Calu3 (cell line): ENCODE measurements at regions of chr22 and their contacts with region 1.

Region 1: GRCh38 chr22:39543095-39543494 is 10.5 kb upstream of the RPS19BP1 start:
- DNase-seq: no peak
- H3K4me3 Mint-ChIP-seq: no peak overlapping the region
- H3K27ac Mint-ChIP-seq: no peak overlapping the region
- H3K4me1 Mint-ChIP-seq: peaks cover 9% of the 10 kb centered on the region
- H3K27me3 Mint-ChIP-seq: peaks cover 74% of the 10 kb centered on the region
- CTCF ChIP-seq: peak; percentile 35

Region 2: GRCh38 chr22:39230261-39231196 is 312.6 kb before region 1 on chr22:
- CTCF ChIA-PET with region 1: no interaction called
- intact Hi-C with region 1: no loop called
- DNase-seq: no peak
- H3K4me3 Mint-ChIP-seq: no peak overlapping the region
- H3K27ac Mint-ChIP-seq: no peak overlapping the region
- H3K4me1 Mint-ChIP-seq: peaks cover 5% of the 10 kb centered on the region
- H3K27me3 Mint-ChIP-seq: no peaks in the 10 kb centered on the region
- CTCF ChIP-seq: no peak

Region 3: GRCh38 chr22:39643311-39644083 is 100.4 kb after region 1 on chr22:
- CTCF ChIA-PET with region 1: no interaction called
- intact Hi-C with region 1: no loop called
- DNase-seq: no peak
- H3K4me3 Mint-ChIP-seq: no peak overlapping the region
- H3K27ac Mint-ChIP-seq: no peak overlapping the region
- H3K4me1 Mint-ChIP-seq: no peaks in the 10 kb centered on the region
- H3K27me3 Mint-ChIP-seq: peaks cover 60% of the 10 kb centered on the region
- CTCF ChIP-seq: no peak

Region 4: GRCh38 chr22:39932918-39933649 is 390.0 kb after region 1 on chr22:
- CTCF ChIA-PET with region 1: no interaction called
- intact Hi-C with region 1: loop called (anchors 10 kb)
- DNase-seq: peak; percentile 58
- H3K4me3 Mint-ChIP-seq: no peak overlapping the region
- H3K27ac Mint-ChIP-seq: no peak overlapping the region
- H3K4me1 Mint-ChIP-seq: no peaks in the 10 kb centered on the region
- H3K27me3 Mint-ChIP-seq: peaks cover 57% of the 10 kb centered on the region
- CTCF ChIP-seq: peak; percentile 83